ENCODE measurements at regions of chr2 and their contacts with region 1.

Region 1: GRCh38 chr2:218395797-218396687 is 3.6 kb upstream of the CTDSP1 start:
- DNase-seq: peak; percentile 95
- H3K4me3 ChIP-seq: peak overlapping the region; percentile 23 to 55 (median 51)
- H3K27ac ChIP-seq: peak overlapping the region; percentile 82
- H3K4me1 ChIP-seq: peaks cover 28% of the 10 kb centered on the region
- H3K27me3 ChIP-seq: no peaks in the 10 kb centered on the region
- CTCF ChIP-seq: peak; percentile 71 to 87
- POLR2A ChIP-seq: peak; percentile 20

Region 2: GRCh38 chr2:218269899-218270720 is 125.9 kb before region 1 on chr2 and contains the starts of genes AAMP and PNKD:
- CTCF ChIA-PET with region 1: interaction called, 99 read pairs
- POLR2A ChIA-PET with region 1: no interaction called
- dilution Hi-C with region 1: no loop called
- intact Hi-C with region 1: loop called (anchors 1 kb)
- DNase-seq: peak; percentile 100
- H3K4me3 ChIP-seq: peak within 1 kb of the TSS; percentile 87 to 92 (median 88)
- H3K27ac ChIP-seq: peak within 1 kb of the TSS; percentile 65
- H3K4me1 ChIP-seq: peaks cover 19% of the 10 kb centered on the region
- H3K27me3 ChIP-seq: no peaks in the 10 kb centered on the region
- CTCF ChIP-seq: no peak
- POLR2A ChIP-seq: peak; percentile 83
- total RNA-seq, gene AAMP: 59.7 and 69.3 TPM in 2 replicates
- total RNA-seq, gene PNKD: 56.1 and 56.6 TPM in 2 replicates

Region 3: GRCh38 chr2:218292048-218293014 is 103.7 kb before region 1 on chr2 and contains the start of gene TMBIM1:
- CTCF ChIA-PET with region 1: interaction called, 46 read pairs
- POLR2A ChIA-PET with region 1: interaction called, 4 read pairs
- dilution Hi-C with region 1: no loop called
- intact Hi-C with region 1: loop called (anchors 1 kb)
- DNase-seq: peak; percentile 69
- H3K4me3 ChIP-seq: peak within 1 kb of the TSS; percentile 69 to 79 (median 74)
- H3K27ac ChIP-seq: peak within 1 kb of the TSS; percentile 63
- H3K4me1 ChIP-seq: peaks cover 63% of the 10 kb centered on the region
- H3K27me3 ChIP-seq: no peaks in the 10 kb centered on the region
- CTCF ChIP-seq: peak; percentile 61 to 97
- POLR2A ChIP-seq: peak; percentile 68
- total RNA-seq, gene TMBIM1: 141 and 159 TPM in 2 replicates

Region 4: DNA sequence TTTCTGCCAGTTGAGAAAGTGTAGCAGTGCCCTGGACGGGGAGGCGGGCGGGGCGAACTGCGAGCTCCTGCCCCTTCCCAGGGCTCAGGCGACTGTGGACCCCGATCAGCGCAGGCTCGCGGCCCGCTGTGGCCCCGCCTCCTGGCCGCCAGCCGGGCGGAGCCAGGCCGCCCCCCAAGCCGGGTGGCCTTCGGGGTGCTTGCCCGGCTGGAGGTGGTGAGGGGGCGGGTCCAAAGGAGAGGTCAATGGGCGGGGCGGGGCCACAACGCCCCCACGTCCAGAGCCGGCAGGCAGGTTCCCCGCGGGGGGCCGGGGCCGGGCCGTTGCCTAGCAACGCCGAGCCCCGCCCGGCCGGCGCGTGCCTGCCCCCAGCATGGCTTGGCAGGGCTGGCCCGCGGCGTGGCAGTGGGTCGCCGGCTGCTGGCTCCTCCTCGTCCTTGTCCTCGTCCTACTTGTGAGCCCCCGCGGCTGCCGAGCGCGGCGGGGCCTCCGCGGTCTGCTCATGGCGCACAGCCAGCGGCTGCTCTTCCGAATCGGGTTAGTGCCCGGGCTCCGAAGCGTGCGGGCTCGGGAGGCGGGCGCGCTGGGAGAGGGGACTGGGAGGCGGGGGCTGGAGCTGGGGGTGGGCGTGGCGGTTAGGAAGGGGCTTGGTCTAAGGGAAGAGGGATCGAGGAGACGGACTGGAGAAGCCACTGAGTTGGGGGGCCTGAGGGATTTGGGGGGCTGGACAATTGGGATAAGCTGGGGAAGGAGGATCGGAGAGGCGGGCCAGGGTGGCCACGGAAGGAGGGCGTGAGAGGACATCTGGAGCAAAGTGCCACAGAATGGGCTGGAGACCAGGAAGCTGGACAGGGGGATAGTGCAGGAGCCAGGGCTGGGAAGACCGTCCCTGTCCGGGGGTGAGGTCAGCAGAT is 72.9 kb before region 1 on chr2:
- CTCF ChIA-PET with region 1: interaction called, 12 read pairs
- POLR2A ChIA-PET with region 1: interaction called, 3 read pairs
- dilution Hi-C with region 1: no loop called
- intact Hi-C with region 1: loop called (anchors 1 kb)
- DNase-seq: peak; percentile 95
- H3K4me3 ChIP-seq: peak overlapping the region; percentile 49 to 71 (median 67)
- H3K27ac ChIP-seq: peak overlapping the region; percentile 91
- H3K4me1 ChIP-seq: peaks cover 24% of the 10 kb centered on the region
- H3K27me3 ChIP-seq: no peaks in the 10 kb centered on the region
- CTCF ChIP-seq: no peak
- POLR2A ChIP-seq: no peak

Region 5: DNA sequence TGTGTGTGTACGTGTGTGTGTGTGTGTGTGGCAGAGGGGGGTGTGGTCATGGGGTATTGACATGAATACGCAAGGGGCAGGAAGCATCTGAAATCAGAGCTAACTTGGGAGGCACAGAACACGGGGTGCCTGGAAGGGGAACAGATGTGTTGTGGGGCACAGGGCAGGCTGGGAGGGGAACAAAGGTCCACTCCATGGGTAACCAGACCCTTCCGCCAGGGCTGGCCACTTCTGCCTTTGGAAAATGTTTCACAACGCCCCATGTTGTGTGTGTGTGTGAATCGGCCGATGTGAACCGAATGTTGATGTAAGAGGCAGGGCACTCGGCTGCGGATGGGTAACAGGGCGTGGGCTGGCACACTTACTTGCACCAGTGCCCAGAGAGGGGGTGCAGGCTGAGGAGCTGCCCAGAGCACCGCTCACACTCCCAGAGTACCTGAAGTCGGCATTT is 14.1 kb before region 1 on chr2 and contains the start of gene SLC11A1:
- CTCF ChIA-PET with region 1: interaction called, 13 read pairs
- POLR2A ChIA-PET with region 1: no interaction called
- dilution Hi-C with region 1: no loop called
- intact Hi-C with region 1: no loop called
- DNase-seq: no peak
- H3K4me3 ChIP-seq: no peak within 1 kb of the TSS
- H3K27ac ChIP-seq: no peak within 1 kb of the TSS
- H3K4me1 ChIP-seq: no peaks in the 10 kb centered on the region
- H3K27me3 ChIP-seq: peaks cover 2 to 7% of the 10 kb centered on the region in 2 experiments
- CTCF ChIP-seq: no peak
- POLR2A ChIP-seq: no peak
- total RNA-seq, gene SLC11A1: not detected in 2 replicates

Region 6: DNA sequence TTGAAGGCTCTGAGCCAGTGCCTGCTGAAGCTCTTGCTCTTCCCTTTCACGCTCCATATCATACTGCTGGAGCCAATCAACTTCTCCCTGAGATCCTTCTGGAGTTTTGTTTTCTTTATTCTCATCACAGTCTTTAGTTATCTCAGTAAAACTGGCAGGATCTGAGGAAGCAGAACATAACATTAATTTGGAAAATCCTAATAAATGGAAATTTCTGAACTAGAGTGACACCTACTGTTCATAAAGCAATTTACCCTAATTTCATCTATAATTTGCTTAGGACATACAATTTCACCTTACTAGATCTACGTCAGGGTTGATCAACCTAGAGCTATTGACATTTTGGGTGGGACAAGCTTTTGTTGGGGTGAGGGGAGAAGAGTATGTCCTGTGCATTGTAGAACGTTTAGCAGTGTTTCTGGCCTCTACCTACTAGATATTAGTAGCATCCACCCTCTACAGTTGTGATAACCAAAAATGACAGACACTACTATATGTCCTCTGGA is 70.0 kb after region 1 on chr2:
- CTCF ChIA-PET with region 1: interaction called, 20 read pairs
- POLR2A ChIA-PET with region 1: no interaction called
- dilution Hi-C with region 1: no loop called
- intact Hi-C with region 1: no loop called
- DNase-seq: peak; percentile 52
- H3K4me3 ChIP-seq: no peak overlapping the region
- H3K27ac ChIP-seq: no peak overlapping the region
- H3K4me1 ChIP-seq: no peaks in the 10 kb centered on the region
- H3K27me3 ChIP-seq: no peaks in the 10 kb centered on the region
- CTCF ChIP-seq: peak in 1 of 2 donors; percentile 23
- POLR2A ChIP-seq: no peak

Region 7: GRCh38 chr2:218631837-218632236 is 235.8 kb after region 1 on chr2:
- CTCF ChIA-PET with region 1: no interaction called
- POLR2A ChIA-PET with region 1: no interaction called
- dilution Hi-C with region 1: no loop called
- intact Hi-C with region 1: loop called (anchors 5 kb)
- DNase-seq: peak; percentile 95
- H3K4me3 ChIP-seq: no peak overlapping the region
- H3K27ac ChIP-seq: peak overlapping the region; percentile 78
- H3K4me1 ChIP-seq: peaks cover 20% of the 10 kb centered on the region
- H3K27me3 ChIP-seq: no peaks in the 10 kb centered on the region
- CTCF ChIP-seq: no peak
- POLR2A ChIP-seq: peak; percentile 59

Measured in endothelial cell of umbilical vein (primary cell).